AG04450 (cell line): ENCODE measurements at regions of chr6 and their contacts with region 1.

Region 1: DNA sequence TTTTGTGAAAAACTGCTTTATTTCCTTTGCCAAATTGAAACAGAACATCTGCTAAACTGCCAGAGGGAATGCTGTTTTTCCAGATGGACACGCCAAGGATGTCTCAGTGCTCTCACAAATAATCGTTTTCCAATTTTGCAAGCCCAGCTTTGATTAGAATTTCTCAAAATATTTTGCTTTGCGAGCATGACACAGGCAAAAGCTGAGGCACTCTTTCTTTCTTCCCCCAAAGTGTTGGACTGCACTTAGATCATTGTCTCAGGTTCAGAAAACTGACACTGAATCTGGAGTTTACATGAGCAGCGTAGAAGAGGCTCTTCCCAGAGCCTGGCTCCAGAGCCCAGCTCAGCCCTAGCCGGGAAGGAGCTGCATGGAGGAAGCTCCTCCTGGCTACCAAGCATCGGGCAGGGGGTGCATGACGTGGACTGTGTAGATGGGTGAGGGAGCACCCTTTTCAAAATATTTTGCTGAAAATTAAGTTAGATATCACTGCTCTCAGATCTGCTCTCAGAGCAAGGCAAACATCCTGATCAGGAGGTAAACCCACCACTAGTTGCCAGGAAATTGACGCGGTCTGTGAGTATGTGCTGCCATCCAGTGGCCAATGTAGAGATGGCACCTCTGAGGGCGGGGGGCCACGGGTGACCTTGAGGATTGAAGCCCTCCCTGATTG is 107.5 kb downstream of the SLC22A3 start:
- DNase-seq: peak; percentile 24
- H3K4me3 ChIP-seq: peak overlapping the region; percentile 48
- H3K27ac ChIP-seq: peak overlapping the region; percentile 43
- H3K27me3 ChIP-seq: no peaks in the 10 kb centered on the region
- CTCF ChIP-seq: peak; percentile 97

Region 2: GRCh38 chr6:159862103-159862502 is 593.6 kb before region 1 on chr6:
- CTCF ChIA-PET with region 1: interaction called, 35 read pairs
- POLR2A ChIA-PET with region 1: no interaction called
- DNase-seq: no peak
- H3K4me3 ChIP-seq: no peak overlapping the region
- H3K27ac ChIP-seq: no peak overlapping the region
- H3K27me3 ChIP-seq: no peaks in the 10 kb centered on the region
- CTCF ChIP-seq: no peak

Region 3: DNA sequence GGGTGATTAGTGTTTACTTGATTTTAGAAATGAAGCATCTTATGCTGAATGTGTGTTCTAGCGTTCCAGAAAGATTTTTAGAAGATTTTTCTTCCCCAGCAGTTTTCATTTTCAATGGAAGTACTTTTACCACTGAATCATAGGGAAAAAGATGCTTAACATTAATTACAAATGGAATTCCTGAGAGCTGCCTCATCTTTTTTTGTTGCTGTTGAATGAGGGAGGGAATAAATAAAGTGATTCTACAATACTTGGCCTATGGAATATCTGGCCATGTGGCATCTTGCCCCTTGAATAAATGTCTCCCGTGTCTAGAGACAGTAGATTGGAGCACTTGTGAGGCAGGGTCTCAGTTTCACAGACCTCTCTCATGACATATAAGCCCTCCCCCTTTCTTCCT is 378.2 kb before region 1 on chr6:
- CTCF ChIA-PET with region 1: interaction called, 13 read pairs
- POLR2A ChIA-PET with region 1: no interaction called
- DNase-seq: peak; percentile 29
- H3K4me3 ChIP-seq: no peak overlapping the region
- H3K27ac ChIP-seq: peak overlapping the region; percentile 47
- H3K27me3 ChIP-seq: no peaks in the 10 kb centered on the region
- CTCF ChIP-seq: no peak

Region 4: GRCh38 chr6:160088069-160088783 is 367.5 kb before region 1 on chr6:
- CTCF ChIA-PET with region 1: interaction called, 186 read pairs
- POLR2A ChIA-PET with region 1: interaction called, 6 read pairs
- DNase-seq: peak; percentile 76
- H3K4me3 ChIP-seq: no peak overlapping the region
- H3K27ac ChIP-seq: peak overlapping the region; percentile 47
- H3K27me3 ChIP-seq: no peaks in the 10 kb centered on the region
- CTCF ChIP-seq: peak; percentile 95

Region 5: GRCh38 chr6:160137989-160138835 is 317.5 kb before region 1 on chr6:
- CTCF ChIA-PET with region 1: interaction called, 75 read pairs
- POLR2A ChIA-PET with region 1: no interaction called
- DNase-seq: peak; percentile 27
- H3K4me3 ChIP-seq: no peak overlapping the region
- H3K27ac ChIP-seq: no peak overlapping the region
- H3K27me3 ChIP-seq: no peaks in the 10 kb centered on the region
- CTCF ChIP-seq: peak; percentile 76